ENCODE measurements at regions of chr6 and their contacts with region 1.

Region 1: DNA sequence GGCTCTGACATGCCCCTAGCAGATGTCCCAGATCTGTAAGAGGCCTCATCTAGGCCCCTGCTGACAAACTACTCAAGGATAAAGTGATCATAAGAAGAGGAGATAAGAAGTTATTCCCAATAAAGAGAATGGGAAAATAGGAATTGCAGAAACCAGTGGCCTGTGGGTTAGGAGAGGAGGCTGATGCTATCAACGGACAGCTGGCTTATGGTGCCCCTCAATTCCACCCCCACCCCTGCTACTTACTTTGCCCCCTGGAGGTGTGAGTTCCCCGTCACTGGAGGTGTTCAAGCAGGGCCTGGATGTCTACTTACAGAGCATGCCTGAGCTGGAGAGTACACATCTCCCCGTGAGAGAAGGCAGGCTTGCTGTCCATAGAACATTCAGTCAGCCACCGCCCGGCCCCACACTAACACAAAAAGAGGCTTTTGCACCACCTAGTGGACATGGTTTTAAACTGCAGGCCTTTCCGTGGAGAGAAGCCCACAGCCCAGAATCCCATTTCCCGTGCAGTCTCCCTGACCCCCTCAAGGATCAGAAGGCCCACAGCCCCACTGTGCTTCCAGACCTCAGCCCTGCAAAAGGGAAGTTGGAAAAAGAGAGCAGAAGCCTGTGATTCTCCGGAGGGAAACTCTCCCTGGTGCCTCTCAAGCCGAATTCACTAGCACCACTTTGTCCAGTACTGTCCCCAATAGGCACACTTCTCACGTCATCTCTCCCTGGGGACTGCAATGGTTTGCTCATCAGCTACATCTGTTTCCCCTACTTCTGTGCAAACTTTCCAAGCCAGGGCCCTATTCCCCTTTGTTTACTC is 23.8 kb upstream of the BNIP5 start:
- DNase-seq: peak; percentile 85 to 88
- ATAC-seq: peak; percentile 90
- H3K4me3 ChIP-seq: no peak overlapping the region
- H3K27ac ChIP-seq: peak overlapping the region in 1 of 2 donors; percentile 10
- H3K4me1 ChIP-seq: no peaks in the 10 kb centered on the region
- H3K27me3 ChIP-seq: no peaks in the 10 kb centered on the region

Region 2: GRCh38 chr6:36123257-36124139 is 236.9 kb before region 1 on chr6:
- intact Hi-C with region 1: loop called (anchors 5 kb)
- DNase-seq: peak; percentile 88 to 92
- ATAC-seq: peak; percentile 87
- H3K4me3 ChIP-seq: no peak overlapping the region
- H3K27ac ChIP-seq: no peak overlapping the region
- H3K4me1 ChIP-seq: no peaks in the 10 kb centered on the region
- H3K27me3 ChIP-seq: no peaks in the 10 kb centered on the region

Region 3: DNA sequence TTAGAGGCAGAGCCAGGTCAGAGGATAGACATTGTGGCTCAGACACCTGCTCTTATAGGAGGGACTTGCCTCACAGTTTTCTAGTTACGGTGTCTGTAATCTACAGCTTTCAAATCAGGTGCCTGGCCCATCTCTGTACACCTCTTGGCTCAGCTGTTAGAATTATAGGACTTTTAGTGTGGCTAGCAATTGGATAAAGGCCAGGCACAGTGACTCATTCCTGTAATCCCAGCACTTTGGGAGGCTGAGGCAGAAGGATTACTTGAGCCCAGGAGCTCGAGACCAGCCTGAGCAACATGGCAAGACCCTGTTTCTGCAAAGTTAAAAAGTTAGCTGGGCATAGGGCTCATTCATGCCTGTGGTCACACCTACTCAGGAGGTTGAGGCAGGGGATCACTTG is 143.9 kb before region 1 on chr6:
- intact Hi-C with region 1: loop called in 1 of 2 experiments (anchors 10 kb)
- DNase-seq: no peak
- ATAC-seq: no peak
- H3K4me3 ChIP-seq: no peak overlapping the region
- H3K27ac ChIP-seq: no peak overlapping the region
- H3K4me1 ChIP-seq: no peaks in the 10 kb centered on the region
- H3K27me3 ChIP-seq: no peaks in the 10 kb centered on the region

Region 4: GRCh38 chr6:36302227-36302976 is 58.0 kb before region 1 on chr6:
- intact Hi-C with region 1: loop called (anchors 1 to 2 kb)
- DNase-seq: peak; percentile 88 to 90
- ATAC-seq: peak; percentile 88
- H3K4me3 ChIP-seq: no peak overlapping the region
- H3K27ac ChIP-seq: no peak overlapping the region
- H3K4me1 ChIP-seq: no peaks in the 10 kb centered on the region
- H3K27me3 ChIP-seq: no peaks in the 10 kb centered on the region

Region 5: DNA sequence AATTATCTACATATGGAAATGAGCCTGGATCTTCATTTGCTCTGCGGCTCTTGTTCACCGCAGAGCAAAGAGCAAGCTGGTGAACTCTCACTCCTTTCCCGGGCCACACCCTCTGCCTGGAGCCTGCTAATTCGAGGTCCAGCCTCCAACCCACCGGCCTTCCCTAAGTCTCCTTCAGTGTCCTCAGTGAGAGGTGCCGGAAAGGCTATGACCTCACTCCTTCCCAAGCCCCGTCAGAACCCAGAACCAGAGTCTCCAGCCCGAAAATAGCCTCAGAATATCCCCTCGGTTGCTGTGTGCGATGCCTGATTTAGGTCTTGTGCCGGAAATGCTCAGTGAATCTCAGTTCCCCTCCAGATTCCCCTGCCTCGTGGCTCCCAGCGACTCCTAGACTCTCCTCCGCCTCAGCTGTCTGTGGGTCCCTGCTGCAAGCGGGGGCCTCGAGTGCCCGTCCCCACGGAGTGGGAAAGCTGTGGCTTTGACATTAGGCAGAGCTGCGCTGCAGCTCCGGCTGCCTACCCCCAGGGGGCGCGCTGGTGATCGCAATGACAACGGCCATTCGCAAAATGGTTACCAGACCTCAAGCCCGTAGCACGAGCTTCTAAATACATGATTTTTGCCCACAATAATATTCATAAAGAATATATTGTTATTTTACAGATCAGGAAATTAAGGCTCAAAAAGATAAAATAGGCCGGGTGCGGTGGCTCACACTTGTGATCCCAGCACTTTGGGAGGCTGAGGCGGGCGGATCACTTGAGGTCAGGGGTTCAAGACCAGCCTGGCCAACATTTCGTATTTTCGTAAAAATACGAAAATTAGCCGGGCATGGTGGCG is 19.6 kb before region 1 on chr6:
- intact Hi-C with region 1: loop called (anchors 2 kb)
- DNase-seq: peak; percentile 85 to 95
- ATAC-seq: peak; percentile 88
- H3K4me3 ChIP-seq: no peak overlapping the region
- H3K27ac ChIP-seq: no peak overlapping the region
- H3K4me1 ChIP-seq: no peaks in the 10 kb centered on the region
- H3K27me3 ChIP-seq: no peaks in the 10 kb centered on the region

Region 6: GRCh38 chr6:36423101-36423824 is 62.8 kb after region 1 on chr6:
- intact Hi-C with region 1: no loop called
- DNase-seq: peak; percentile 99 to 100
- ATAC-seq: peak; percentile 99
- H3K4me3 ChIP-seq: peak overlapping the region; percentile 36 to 69
- H3K27ac ChIP-seq: peak overlapping the region; percentile 43 to 46
- H3K4me1 ChIP-seq: no peaks in the 10 kb centered on the region
- H3K27me3 ChIP-seq: no peaks in the 10 kb centered on the region